Heart right ventricle (tissue), 16 donors: ENCODE measurements at regions of chr6 and their contacts with region 1.

Region 1: GRCh38 chr6:152267967-152268845 is 369.0 kb downstream of the SYNE1 start:
- DNase-seq: no peak
- ATAC-seq: no peak
- H3K4me3 ChIP-seq: no peak overlapping the region
- H3K27ac ChIP-seq: peak overlapping the region in 3 of 10 donors; percentile 8 to 41 (median 34)
- H3K4me1 ChIP-seq: peaks cover 14 to 55% (median 41%) of the 10 kb centered on the region in 9 donors
- H3K27me3 ChIP-seq: no peaks in the 10 kb centered on the region
- CTCF ChIP-seq: peak; percentile 31 to 68 (median 60)

Region 2: DNA sequence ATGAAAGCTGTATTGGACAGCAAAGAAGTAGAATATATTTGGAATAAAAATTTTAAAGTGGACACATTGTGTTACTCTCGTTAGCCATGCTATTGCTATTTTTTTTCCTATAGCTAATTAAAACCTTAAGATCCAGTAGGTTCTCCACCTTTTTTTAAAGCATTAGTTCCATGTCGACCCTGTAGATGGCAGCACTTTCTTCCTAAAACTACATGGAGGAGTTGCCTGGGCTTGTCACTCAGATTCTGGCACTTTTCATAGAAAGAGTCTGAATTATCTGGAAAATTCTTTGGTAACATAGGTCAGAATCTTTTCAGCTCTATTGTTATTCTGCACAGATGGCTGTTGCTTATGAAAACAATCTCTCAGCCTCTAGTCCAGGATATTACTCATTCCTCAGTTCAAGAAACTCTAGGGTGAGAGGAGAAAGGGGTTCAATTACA is 502.7 kb before region 1 on chr6:
- intact Hi-C with region 1: loop called in 5 of 10 experiments (anchors 5 to 10 kb)
- DNase-seq: peak in 1 of 2 donors; percentile 70
- ATAC-seq: peak; percentile 30 to 73 (median 48)
- H3K4me3 ChIP-seq: no peak overlapping the region
- H3K27ac ChIP-seq: no peak overlapping the region
- H3K4me1 ChIP-seq: peaks cover 0 to 22% (median 8%) of the 10 kb centered on the region in 9 donors
- H3K27me3 ChIP-seq: no peaks in the 10 kb centered on the region
- CTCF ChIP-seq: peak; percentile 57 to 85 (median 75)

Region 3: DNA sequence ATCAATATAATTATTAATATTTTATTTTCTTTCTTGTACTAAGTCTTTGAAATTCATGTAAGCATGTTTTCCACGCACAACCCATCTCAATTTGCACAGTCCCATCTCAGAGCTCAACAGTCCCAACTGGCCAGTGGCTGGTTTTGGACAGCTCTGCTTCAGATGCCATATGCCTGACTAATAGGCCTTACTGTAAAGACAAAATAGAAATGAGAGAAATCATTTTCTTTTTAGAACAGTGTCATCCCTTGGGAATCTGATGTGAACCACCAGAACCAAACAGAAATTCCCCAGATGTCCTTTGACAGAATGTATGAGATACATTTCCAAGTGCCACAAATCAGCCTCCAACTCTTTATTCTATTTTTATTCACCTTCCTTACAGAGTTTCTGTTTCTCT is 121.8 kb before region 1 on chr6:
- intact Hi-C with region 1: loop called in 1 of 10 experiments (anchors 10 kb)
- DNase-seq: no peak
- ATAC-seq: peak in 6 of 8 donors; percentile 31 to 63 (median 43)
- H3K4me3 ChIP-seq: no peak overlapping the region
- H3K27ac ChIP-seq: peak overlapping the region in 3 of 10 donors; percentile 6 to 66 (median 39)
- H3K4me1 ChIP-seq: peaks cover 0 to 36% (median 10%) of the 10 kb centered on the region in 9 donors
- H3K27me3 ChIP-seq: no peaks in the 10 kb centered on the region
- CTCF ChIP-seq: no peak

Region 4: GRCh38 chr6:152206072-152206818 is 62.0 kb before region 1 on chr6:
- intact Hi-C with region 1: loop called in 2 of 10 experiments (anchors 5 to 10 kb)
- DNase-seq: peak in 1 of 2 donors; percentile 30
- ATAC-seq: no peak
- H3K4me3 ChIP-seq: no peak overlapping the region
- H3K27ac ChIP-seq: no peak overlapping the region
- H3K4me1 ChIP-seq: no peaks in the 10 kb centered on the region
- H3K27me3 ChIP-seq: no peaks in the 10 kb centered on the region
- CTCF ChIP-seq: peak; percentile 3 to 58 (median 44)

Region 5: GRCh38 chr6:152290693-152291092 is 22.5 kb after region 1 on chr6:
- intact Hi-C with region 1: no loop called
- DNase-seq: no peak
- ATAC-seq: peak in 1 of 8 donors; percentile 68
- H3K4me3 ChIP-seq: no peak overlapping the region
- H3K27ac ChIP-seq: peak overlapping the region in 7 of 10 donors; percentile 14 to 66 (median 55)
- H3K4me1 ChIP-seq: peaks cover 0 to 38% (median 22%) of the 10 kb centered on the region in 9 donors
- H3K27me3 ChIP-seq: no peaks in the 10 kb centered on the region
- CTCF ChIP-seq: no peak